ENCODE measurements at regions of chr6 and their contacts with region 1.

Region 1: DNA sequence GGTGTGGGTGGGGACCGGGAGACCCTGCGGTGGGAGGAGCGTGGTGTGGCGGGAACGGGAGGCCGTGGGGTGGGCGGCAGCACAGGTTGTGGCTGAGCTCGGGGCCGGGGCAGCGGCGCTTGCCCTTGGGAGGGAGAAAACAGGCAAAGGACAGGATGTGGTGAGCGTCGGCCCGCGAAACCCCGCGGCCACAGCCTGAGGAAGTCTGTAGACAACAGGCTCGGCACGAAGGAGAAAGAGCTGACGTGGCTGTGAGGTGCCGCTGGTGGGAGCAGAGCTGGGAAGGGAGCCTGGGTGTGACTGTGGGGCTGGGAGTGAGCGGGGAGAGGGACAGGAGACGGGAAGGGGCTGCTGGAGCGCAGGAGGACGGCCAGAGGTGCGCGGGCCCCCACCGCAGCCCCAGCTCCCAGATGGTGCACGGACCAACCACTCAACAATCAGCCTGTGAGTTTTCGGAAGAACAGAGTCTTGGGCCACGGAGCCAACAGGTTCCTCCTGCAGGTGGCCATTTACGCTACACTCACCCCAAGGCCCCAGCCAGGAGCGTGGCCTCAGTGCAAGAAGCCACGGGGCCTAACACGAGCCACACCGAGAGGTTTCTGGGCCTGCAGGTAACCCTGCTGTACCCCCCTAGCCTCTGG is 202.8 kb downstream of the DLL1 start:
- DNase-seq: peak; percentile 72
- H3K4me3 Mint-ChIP-seq: peak overlapping the region; percentile 84
- H3K27ac Mint-ChIP-seq: peak overlapping the region; percentile 89
- H3K4me1 Mint-ChIP-seq: peaks cover 28% of the 10 kb centered on the region
- H3K27me3 Mint-ChIP-seq: no peaks in the 10 kb centered on the region

Region 2: DNA sequence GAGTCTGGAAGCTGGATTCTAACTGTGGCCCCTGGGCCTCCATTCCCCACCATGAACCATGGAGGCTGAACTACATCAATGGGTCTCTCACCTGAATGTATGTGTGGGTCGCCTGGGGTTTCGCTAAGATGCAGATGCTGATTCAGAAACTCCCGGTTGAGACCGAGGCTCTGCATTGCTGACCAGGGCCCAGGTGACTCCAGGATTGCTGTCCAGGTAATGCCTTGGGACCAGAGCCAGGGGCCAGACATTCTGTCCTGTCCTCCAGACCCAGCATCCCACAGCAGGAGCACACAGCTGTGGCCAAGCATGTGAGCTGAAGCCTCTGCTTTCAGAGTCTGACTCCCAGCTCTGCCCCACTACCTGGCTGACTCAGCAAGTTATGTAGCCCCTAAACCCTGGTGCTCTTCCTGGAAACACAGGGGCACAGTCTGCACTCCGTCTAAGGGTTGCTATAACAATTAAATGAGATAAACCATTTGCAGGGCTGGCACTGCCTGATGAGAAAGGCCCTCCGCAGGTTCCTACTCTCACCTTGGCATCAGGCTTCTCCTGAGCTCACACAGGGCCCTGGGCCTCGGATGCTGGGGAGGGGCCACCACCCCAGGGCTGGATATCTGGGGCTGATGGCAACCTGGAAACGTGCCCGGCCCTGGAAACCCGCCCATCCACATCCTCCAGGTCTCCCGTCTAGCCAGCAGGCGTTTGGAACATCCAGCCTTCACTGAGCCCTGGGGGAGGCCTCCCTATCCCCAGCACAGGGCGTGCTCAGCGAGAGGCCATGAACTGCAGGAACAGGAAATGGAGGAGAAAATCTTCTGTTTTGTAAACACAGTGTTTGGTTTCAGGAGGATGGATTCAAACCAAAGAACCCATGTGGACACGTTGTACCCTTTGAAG is 27.1 kb after region 1 on chr6:
- CTCF ChIA-PET with region 1: no interaction called
- intact Hi-C with region 1: no loop called
- DNase-seq: no peak
- H3K4me3 Mint-ChIP-seq: no peak overlapping the region
- H3K27ac Mint-ChIP-seq: no peak overlapping the region
- H3K4me1 Mint-ChIP-seq: no peaks in the 10 kb centered on the region
- H3K27me3 Mint-ChIP-seq: no peaks in the 10 kb centered on the region

Region 3: DNA sequence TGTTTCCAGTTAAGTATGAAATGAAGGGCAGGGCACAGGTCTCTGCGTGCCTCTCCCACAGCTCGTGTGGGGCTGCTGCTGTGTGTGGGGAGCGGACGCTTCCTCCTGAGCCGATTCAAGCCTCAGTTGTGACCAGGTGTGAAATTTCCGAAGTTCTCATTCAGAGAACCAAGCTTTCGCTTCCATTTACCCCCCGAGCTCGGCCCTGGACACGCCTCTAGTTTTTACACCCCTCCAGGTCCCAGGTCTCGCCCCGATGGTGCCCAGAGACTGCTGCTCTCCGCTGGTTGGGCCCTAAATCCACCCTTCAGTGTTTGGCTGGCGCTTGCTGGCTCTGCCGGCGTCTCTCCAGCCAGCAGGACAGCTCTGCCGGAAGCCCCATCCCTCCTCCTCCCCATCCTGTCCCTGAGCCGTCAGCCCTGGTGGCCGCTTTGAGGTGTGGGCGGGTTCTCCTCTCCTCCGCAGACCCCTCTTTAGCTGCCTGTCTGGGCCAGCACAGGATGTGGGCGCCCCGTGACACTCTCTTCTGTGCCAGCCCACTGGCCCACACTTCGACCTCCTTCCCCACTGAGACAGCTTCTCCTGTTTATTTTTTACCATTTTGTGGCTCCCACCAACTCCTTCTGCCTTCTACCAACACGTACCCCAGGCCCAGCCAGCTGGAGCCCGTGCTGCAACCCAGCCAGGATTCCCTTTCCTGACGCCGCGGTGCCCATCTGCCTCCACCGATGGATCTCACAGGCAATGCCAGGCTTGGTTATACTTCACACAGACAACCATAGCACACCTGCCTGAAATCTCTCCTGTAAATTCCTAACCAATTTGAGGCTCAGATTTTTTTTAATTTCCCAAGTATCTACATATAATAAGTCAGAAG is 60.0 kb after region 1 on chr6:
- CTCF ChIA-PET with region 1: no interaction called
- intact Hi-C with region 1: loop called (anchors 2 kb)
- DNase-seq: peak; percentile 65
- H3K4me3 Mint-ChIP-seq: peak overlapping the region; percentile 52
- H3K27ac Mint-ChIP-seq: peak overlapping the region; percentile 66
- H3K4me1 Mint-ChIP-seq: peaks cover 39% of the 10 kb centered on the region
- H3K27me3 Mint-ChIP-seq: peaks cover 3% of the 10 kb centered on the region

Region 4: GRCh38 chr6:170306324-170307079 is 218.4 kb after region 1 on chr6 and contains the start of gene FAM120B:
- CTCF ChIA-PET with region 1: no interaction called
- intact Hi-C with region 1: no loop called
- DNase-seq: peak; percentile 92
- H3K4me3 Mint-ChIP-seq: peak within 1 kb of the TSS; percentile 86
- H3K27ac Mint-ChIP-seq: peak within 1 kb of the TSS; percentile 81
- H3K4me1 Mint-ChIP-seq: peaks cover 36% of the 10 kb centered on the region
- H3K27me3 Mint-ChIP-seq: peaks cover 4% of the 10 kb centered on the region
- total RNA-seq, gene FAM120B: 15.5 to 16.1 TPM

Measured in activated naive CD4-positive, alpha-beta T cell treated with anti-CD3 and anti-CD28 coated beads for 36 hours (primary cell).